Dendritic cell treated with granulocyte-macrophage colony-stimulating factor and Interleukin-4, amounts not matched to agents 40 ng/mL and 50 ng/mL, for 4 days (primary cell): ENCODE measurements at regions of chr16 and their contacts with region 1.

Region 1: GRCh38 chr16:71919035-71919434 is 23.7 kb downstream of the IST1 start:
- H3K4me3 Mint-ChIP-seq: peak overlapping the region; percentile 0
- H3K27ac Mint-ChIP-seq: peak overlapping the region; percentile 47
- H3K4me1 Mint-ChIP-seq: peaks cover 80% of the 10 kb centered on the region
- H3K27me3 Mint-ChIP-seq: no peaks in the 10 kb centered on the region

Region 2: GRCh38 chr16:71723537-71724319 is 195.3 kb before region 1 on chr16:
- intact Hi-C with region 1: loop called (anchors 10 kb)
- H3K4me3 Mint-ChIP-seq: peak overlapping the region; percentile 95
- H3K27ac Mint-ChIP-seq: no peak overlapping the region
- H3K4me1 Mint-ChIP-seq: peaks cover 38% of the 10 kb centered on the region
- H3K27me3 Mint-ChIP-seq: peaks cover 24% of the 10 kb centered on the region